PC-9 (cell line): ENCODE measurements at regions of chr2 and their contacts with region 1.

Region 1: DNA sequence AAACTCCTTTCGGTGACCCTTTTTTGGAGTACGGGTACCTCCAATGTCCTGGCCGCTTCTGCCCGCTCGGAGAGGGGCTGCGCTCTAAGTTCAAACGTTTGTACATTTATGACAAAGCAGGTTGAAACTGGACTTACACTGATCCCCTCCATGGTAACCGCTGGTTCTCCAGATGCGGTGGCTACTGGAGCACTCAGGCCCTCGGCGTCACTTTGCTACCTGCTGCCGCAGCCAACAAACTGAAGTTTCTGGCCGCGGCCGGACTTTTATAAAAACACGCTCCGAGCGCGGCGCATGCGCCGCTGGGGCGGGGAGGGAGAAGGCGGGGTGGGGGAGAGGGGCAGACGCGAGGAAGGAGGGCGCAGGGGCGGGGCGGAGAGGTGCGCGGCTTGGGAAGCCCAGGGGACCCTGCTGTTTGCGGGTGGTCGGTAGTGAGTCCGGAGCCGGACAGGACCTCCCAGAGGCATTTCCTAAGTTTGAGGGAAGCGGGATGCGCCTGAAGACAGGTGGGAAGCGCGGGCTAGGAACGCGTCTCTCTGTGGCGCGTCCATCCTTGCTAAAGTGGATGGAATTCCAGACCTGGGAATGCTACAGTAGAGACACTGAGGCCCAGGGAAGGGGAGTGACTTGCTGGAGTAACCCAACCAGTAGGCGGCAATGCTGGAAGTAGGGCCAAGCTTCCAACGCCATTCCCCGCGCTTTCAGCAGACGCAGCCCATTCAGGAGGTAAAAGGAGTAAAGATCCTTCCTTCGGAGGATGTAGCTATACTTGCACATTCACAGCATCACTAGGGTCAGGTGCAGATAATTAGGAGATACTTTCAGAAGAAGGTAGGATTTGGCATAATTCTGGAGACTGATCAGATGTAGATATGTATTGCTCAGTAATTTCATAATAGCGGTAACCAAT is at the start of gene CXCR4:
- DNase-seq: peak in 1 of 2 experiments; percentile 37
- H3K4me3 ChIP-seq: no peak within 1 kb of the TSS
- H3K27ac ChIP-seq: no peak within 1 kb of the TSS
- H3K4me1 ChIP-seq: no peaks in the 10 kb centered on the region
- H3K27me3 ChIP-seq: no peaks in the 10 kb centered on the region
- CTCF ChIP-seq: no peak
- total RNA-seq, gene CXCR4: 0.70 and 1.1 TPM in 2 replicates

Region 2: GRCh38 chr2:136378712-136379595 is 260.8 kb after region 1 on chr2:
- CTCF ChIA-PET with region 1: no interaction called
- POLR2A ChIA-PET with region 1: no interaction called
- intact Hi-C with region 1: loop called (anchors 5 kb)
- DNase-seq: peak in 1 of 2 experiments; percentile 36
- H3K4me3 ChIP-seq: no peak overlapping the region
- H3K27ac ChIP-seq: no peak overlapping the region
- H3K4me1 ChIP-seq: no peaks in the 10 kb centered on the region
- H3K27me3 ChIP-seq: no peaks in the 10 kb centered on the region
- CTCF ChIP-seq: peak; percentile 79